Panc1 (cell line): ENCODE measurements at regions of chr5 and their contacts with region 1.

Region 1: DNA sequence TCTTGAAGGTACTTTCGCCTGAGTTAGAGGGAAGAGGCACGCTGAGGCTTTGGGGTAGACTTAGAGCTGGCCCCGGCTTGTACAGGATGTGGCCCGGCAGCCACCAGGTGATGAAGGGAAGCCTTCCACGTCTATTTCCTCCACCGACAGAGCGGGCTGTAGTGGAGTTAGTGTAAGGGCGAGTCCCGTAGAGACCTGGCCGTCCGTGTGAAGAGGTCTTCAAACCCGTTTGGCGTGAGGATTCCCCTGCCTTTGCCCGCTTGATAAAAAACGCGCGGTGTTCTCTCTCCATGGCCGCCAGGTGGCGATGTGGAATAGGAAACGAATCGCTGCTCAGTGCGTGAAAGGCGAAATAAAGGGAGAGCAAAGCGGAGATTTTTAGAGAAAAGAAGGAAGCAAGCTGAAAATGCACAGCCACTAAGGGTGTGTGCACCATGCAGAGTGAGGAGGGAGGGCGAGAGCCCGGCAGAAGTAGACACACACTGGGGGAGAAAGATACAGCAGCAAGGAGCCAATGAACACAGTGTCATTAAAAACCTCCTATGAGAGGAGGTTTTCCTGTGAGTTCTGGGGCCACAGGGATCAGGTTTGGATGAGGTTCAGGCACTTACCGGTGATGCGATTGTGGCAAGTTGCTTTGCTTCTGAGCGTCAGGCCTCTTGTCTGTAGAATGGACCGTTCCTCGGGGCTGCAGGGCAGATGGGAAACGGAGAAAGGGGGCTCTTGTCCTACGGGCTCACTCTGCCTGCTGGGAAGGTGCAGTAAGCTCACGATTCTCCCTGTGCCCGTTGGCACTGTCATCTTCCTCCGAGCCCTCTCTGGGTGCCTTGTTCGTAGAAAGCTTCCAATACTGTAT is 34.2 kb downstream of the STC2 start:
- DNase-seq: no peak
- ATAC-seq: peak; percentile 90
- H3K4me3 ChIP-seq: peak overlapping the region; percentile 11 to 50
- H3K27ac ChIP-seq: no peak overlapping the region
- H3K4me1 ChIP-seq: no peaks in the 10 kb centered on the region; the same call in 1 of the 2 replicates
- H3K27me3 ChIP-seq: no peaks in the 10 kb centered on the region
- CTCF ChIP-seq: peak; percentile 90

Region 2: GRCh38 chr5:173331956-173332479 is 38.0 kb after region 1 on chr5:
- CTCF ChIA-PET with region 1: interaction called, 28 read pairs
- POLR2A ChIA-PET with region 1: no interaction called
- in situ Hi-C with region 1: no loop called
- intact Hi-C with region 1: loop called (anchors 1 kb)
- DNase-seq: no peak
- ATAC-seq: peak; percentile 62
- H3K4me3 ChIP-seq: no peak overlapping the region
- H3K27ac ChIP-seq: peak overlapping the region; percentile 45; the same call in 1 of the 2 replicates
- H3K4me1 ChIP-seq: peaks cover 16% of the 10 kb centered on the region
- H3K27me3 ChIP-seq: no peaks in the 10 kb centered on the region
- CTCF ChIP-seq: peak; percentile 94